Right cardiac atrium (tissue), 5 donors: ENCODE measurements at regions of chr15 and their contacts with region 1.

Region 1: GRCh38 chr15:96181873-96182301 is 148.6 kb upstream of the NR2F2 start:
- DNase-seq: peak; percentile 74 to 88 (median 84)
- ATAC-seq: peak; percentile 89 to 92
- H3K4me3 ChIP-seq: no peak overlapping the region
- H3K27ac ChIP-seq: peak overlapping the region; percentile 50
- H3K4me1 ChIP-seq: peaks cover 11% of the 10 kb centered on the region
- H3K27me3 ChIP-seq: no peaks in the 10 kb centered on the region

Region 2: DNA sequence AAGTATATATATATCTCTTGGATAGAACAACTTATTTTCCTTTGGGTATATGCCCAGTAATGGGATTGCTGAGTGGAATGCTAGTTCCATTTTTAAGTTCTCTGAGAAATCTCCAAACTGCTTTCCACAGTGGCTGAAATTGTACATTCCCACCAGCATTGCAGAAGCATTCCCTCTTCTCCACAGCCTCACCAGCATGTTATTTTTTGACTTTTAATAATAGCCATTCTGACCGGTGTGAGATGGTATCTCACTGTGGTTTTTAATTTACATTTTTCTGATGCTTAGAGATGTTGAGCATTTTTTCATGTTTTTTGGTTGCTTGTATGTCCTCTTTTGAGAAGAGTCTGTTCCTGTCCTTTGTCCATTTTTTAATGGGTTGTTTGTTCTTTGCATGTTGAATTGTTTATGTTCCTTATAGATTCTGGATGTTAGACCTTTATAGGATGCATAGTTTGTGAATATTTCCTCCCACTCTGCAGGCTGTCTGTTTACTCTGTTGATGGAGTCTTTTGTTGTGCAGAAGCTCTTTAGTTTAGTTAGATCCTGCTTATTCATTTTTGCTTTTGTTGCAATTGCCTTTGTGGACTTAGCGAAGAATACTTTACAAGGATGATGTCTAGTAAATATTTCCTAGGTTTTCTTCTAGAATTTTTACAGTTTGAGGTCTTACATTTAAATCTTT is 65.9 kb after region 1 on chr15:
- intact Hi-C with region 1: no loop called
- DNase-seq: no peak
- ATAC-seq: no peak
- H3K4me3 ChIP-seq: no peak overlapping the region
- H3K27ac ChIP-seq: no peak overlapping the region
- H3K4me1 ChIP-seq: no peaks in the 10 kb centered on the region
- H3K27me3 ChIP-seq: no peaks in the 10 kb centered on the region

Region 3: DNA sequence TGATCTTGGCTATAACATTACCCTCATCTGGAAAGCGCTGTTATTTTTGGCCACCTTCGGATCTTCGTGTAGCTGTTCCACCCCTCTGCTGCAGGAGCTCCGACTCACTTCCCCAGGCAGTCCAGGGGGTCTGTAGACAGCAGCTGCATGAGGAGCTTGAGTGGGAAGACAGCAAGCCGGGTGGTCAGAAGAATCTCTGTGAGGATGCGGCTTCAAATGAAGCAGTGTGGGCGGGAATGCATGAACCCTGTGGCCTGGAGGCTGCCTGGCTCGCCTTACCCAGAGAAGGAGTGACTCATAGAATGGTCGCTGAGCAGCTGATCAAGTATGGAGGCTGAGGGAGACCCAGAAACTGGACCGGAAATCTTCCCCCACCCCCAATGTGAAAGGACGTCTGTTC is 103.4 kb after region 1 on chr15:
- intact Hi-C with region 1: loop called in 1 of 4 experiments (anchors 10 kb)
- DNase-seq: peak in 2 of 3 donors; percentile 22 to 52
- ATAC-seq: peak; percentile 47 to 62
- H3K4me3 ChIP-seq: no peak overlapping the region
- H3K27ac ChIP-seq: no peak overlapping the region
- H3K4me1 ChIP-seq: peaks cover 4% of the 10 kb centered on the region
- H3K27me3 ChIP-seq: no peaks in the 10 kb centered on the region